Heart left ventricle (tissue), 16 donors: ENCODE measurements at regions of chr6 and their contacts with region 1.

Region 1: GRCh38 chr6:37137201-37138090 is 32.5 kb upstream of the PIM1 start:
- DNase-seq: peak in 1 of 5 donors; percentile 33
- ATAC-seq: peak in 3 of 4 donors; percentile 56 to 69 (median 57)
- H3K4me3 ChIP-seq: no peak overlapping the region
- H3K27ac ChIP-seq: peak overlapping the region in 5 of 12 donors; percentile 12 to 91 (median 39)
- H3K4me1 ChIP-seq: peaks cover 0 to 48% (median 14%) of the 10 kb centered on the region in 12 donors
- H3K27me3 ChIP-seq: no peaks in the 10 kb centered on the region
- CTCF ChIP-seq: no peak
- POLR2A ChIP-seq: no peak

Region 2: DNA sequence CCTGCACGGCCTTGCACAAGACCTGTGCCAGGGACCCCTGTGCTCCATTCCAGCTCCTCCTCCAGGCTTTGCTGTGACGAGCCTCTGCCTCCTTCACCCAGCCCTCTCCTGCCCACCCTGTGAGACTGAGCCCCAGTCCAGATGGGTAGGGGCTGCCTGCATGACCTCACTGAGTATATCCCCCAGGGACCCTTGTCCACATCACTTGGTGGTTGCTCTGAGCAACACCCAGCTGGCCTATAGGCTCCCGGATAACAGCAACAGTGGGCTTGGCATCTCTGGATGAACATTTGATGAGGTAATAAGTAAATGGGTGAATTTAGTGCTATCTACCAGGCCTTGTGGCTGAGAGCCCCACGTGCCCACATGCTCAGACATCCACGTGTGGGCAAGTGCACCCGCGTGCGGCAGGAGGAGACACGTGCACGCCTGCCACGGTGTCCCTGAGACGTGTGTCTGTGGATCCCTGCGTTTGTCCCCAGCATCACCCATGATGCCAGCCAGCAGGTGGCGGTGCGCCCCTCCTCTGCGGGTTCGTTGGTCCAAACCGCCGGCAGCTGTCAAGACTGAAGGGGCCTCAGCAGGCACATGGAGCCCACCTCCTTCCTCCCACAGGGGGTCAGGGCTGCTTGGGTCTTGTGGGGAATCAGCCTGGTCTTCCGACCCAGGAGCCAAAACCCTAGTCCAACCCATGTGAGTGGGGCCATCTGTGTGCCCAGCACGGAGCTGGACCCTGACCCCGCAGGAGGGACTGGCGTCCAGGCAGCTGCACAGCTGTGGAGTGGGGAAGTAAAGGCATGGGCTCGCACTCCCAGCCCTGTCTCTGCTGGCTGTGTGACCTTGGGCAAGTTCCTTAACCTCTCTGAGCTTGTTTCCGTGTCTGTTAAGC is 86.1 kb before region 1 on chr6:
- intact Hi-C with region 1: loop called in 1 of 10 experiments (anchors 10 kb)
- DNase-seq: peak; percentile 89 to 95 (median 90)
- ATAC-seq: peak; percentile 41 to 86 (median 81)
- H3K4me3 ChIP-seq: peak overlapping the region in 1 of 12 donors; percentile 36
- H3K27ac ChIP-seq: peak overlapping the region in 2 of 12 donors; percentile 32 to 93
- H3K4me1 ChIP-seq: peaks cover 0 to 55% (median 14%) of the 10 kb centered on the region in 12 donors
- H3K27me3 ChIP-seq: no peaks in the 10 kb centered on the region
- CTCF ChIP-seq: peak; percentile 82 to 96 (median 90)
- POLR2A ChIP-seq: no peak

Region 3: GRCh38 chr6:37262446-37263026 is 125.1 kb after region 1 on chr6:
- intact Hi-C with region 1: no loop called
- DNase-seq: no peak
- ATAC-seq: no peak
- H3K4me3 ChIP-seq: no peak overlapping the region
- H3K27ac ChIP-seq: no peak overlapping the region
- H3K4me1 ChIP-seq: peaks cover 0 to 48% (median 19%) of the 10 kb centered on the region in 12 donors
- H3K27me3 ChIP-seq: no peaks in the 10 kb centered on the region
- CTCF ChIP-seq: no peak
- POLR2A ChIP-seq: no peak